Dorsolateral prefrontal cortex (tissue), 120 donors: ENCODE measurements at regions of chr7 and their contacts with region 1.

Region 1: GRCh38 chr7:107150375-107151073 is 18.3 kb upstream of the HBP1 start:
- DNase-seq: peak in 7 of 10 donors; percentile 49 to 91 (median 55)
- H3K4me3 ChIP-seq: no peak overlapping the region
- H3K27ac ChIP-seq: no peak overlapping the region
- H3K27me3 ChIP-seq: no peaks in the 10 kb centered on the region
- CTCF ChIP-seq: peak; percentile 66 to 90 (median 77)

Region 2: GRCh38 chr7:106840342-106840741 is 310.2 kb before region 1 on chr7:
- intact Hi-C with region 1: no loop called
- DNase-seq: no peak
- H3K4me3 ChIP-seq: no peak overlapping the region
- H3K27ac ChIP-seq: no peak overlapping the region
- H3K27me3 ChIP-seq: no peaks in the 10 kb centered on the region
- CTCF ChIP-seq: no peak

Region 3: GRCh38 chr7:106947244-106947728 is 203.2 kb before region 1 on chr7:
- intact Hi-C with region 1: loop called (anchors 5 kb)
- DNase-seq: peak in 3 of 10 donors; percentile 39 to 63 (median 44)
- H3K4me3 ChIP-seq: no peak overlapping the region
- H3K27ac ChIP-seq: no peak overlapping the region
- H3K27me3 ChIP-seq: no peaks in the 10 kb centered on the region
- CTCF ChIP-seq: peak; percentile 26 to 79 (median 66)

Region 4: DNA sequence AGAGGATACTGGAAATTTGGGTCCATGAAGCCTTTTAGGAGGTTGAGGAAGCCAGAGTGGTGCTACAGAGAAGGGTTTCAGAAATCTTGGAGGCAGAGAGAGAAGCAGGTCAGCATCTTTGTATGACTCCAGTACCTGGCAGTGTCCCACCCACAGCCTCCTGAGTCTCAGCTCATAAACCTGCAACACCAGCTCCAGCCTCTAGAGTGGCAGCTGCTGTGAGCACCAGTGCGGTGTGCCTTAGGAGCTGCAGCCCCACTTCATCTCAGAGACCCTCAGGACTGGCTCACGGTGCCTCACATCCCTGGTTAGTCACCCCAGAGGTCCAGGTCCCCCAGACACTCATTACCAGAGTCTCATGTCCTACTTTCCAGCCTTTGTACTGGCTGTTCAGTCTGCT is 190.8 kb before region 1 on chr7:
- intact Hi-C with region 1: no loop called
- DNase-seq: no peak
- H3K4me3 ChIP-seq: no peak overlapping the region
- H3K27ac ChIP-seq: no peak overlapping the region
- H3K27me3 ChIP-seq: no peaks in the 10 kb centered on the region
- CTCF ChIP-seq: no peak

Region 5: DNA sequence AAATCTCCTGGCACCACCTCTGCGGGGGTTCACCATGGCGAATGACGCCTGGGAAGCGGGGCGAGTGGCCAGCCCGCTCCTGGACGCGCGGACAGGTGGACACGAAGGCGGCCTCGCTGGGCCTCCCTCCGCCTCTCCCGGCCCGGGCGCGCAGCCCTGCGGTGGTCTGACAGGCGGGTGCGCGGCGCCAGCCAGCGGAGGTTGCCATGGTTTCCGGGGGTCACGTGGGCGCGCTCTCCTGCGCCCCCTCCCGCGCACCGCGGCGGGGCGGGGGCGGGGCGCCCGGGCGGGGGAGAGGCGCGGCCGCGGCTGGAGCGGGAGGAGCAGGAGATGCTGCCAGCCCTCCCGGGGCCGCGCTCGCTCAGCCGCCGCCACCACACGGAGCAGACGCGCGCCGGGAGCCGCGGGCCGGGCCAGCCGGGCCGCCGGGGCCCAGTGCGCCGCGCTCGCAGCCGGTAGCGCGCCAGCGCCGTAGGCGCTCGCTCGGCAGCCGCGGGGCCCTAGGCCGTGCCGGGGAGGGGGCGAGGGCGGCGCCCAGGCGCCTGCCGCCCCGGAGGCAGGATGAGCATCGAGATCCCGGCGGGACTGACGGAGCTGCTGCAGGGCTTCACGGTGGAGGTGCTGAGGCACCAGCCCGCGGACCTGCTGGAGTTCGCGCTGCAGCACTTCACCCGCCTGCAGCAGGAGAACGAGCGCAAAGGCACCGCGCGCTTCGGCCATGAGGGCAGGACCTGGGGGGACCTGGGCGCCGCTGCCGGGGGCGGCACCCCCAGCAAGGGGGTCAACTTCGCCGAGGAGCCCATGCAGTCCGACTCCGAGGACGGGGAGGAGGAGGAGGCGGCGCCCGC is 106.0 kb before region 1 on chr7 and contains the start of gene PRKAR2B:
- intact Hi-C with region 1: loop called in 1 of 2 experiments (anchors 5 kb)
- DNase-seq: peak; percentile 68 to 92 (median 82)
- H3K4me3 ChIP-seq: peak within 1 kb of the TSS; percentile 71 to 97 (median 89)
- H3K27ac ChIP-seq: peak within 1 kb of the TSS; percentile 59 to 97 (median 91)
- H3K27me3 ChIP-seq: no peaks in the 10 kb centered on the region
- CTCF ChIP-seq: peak in 23 of 56 donors; percentile 7 to 49 (median 24)
- total RNA-seq, gene PRKAR2B: 24.3 to 101 (median 69.4) TPM

Region 6: DNA sequence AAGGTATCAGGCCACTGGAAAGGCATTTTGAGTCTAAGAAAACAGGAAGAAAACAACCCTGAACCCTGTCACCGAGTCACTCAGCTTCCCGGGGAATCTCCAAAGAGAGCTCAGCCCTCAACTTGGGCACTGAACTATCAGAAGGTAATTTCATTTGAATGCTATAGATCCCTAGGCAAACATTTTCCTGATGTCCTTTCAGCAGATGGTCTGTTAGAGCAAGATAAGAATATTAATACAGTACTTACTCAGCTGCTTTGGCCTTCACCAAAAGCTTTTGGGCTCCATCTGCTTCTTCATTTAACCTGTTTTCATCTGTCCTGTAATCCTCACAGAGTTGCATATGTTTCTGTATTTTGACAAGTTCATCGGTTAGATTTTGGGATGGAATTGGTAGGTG is 886.6 kb after region 1 on chr7:
- intact Hi-C with region 1: no loop called
- DNase-seq: no peak
- H3K4me3 ChIP-seq: no peak overlapping the region
- H3K27ac ChIP-seq: no peak overlapping the region
- H3K27me3 ChIP-seq: peaks cover 0 to 4% (median 0%) of the 10 kb centered on the region in 45 donors
- CTCF ChIP-seq: no peak